ENCODE measurements at regions of chr20 and their contacts with region 1.

Region 1: DNA sequence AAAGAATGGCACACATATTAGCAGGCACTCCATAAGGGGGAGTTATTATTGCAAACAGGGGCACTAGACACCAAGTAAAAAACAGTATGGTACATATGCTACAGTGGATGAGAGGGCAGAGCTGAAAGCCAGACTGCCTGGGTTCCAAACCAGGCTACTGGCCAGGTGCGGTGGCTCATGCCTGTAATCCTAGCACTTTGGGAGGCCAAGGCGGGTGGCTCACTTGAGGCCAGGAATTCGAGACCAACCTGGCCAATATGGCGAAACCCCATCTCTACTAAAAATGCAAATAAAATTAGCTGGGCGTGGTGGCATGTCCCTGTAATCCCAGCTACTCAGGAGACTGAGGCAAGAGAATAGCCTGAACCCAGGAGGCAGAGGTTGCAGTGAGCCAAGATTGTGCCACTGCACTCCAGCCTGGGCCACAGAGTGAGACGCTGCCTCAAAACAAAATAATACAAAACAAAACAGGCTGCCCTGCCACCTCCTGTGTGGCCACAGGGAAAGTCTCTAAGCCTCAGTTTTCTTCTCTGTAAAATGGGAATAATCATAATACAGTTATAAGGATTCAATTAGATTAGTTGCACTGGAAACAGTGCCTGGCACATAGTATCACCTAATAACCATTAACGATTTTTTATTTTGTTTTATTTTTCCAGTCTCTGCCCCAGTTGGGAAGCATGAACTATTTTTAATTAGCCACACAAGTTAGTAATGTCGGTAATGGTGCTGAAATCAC is 7.5 kb upstream of the TTPAL start:
- DNase-seq: no peak
- ATAC-seq: no peak
- H3K4me3 ChIP-seq: no peak overlapping the region
- H3K27ac ChIP-seq: no peak overlapping the region
- H3K4me1 ChIP-seq: no peaks in the 10 kb centered on the region
- H3K27me3 ChIP-seq: no peaks in the 10 kb centered on the region
- CTCF ChIP-seq: no peak

Region 2: GRCh38 chr20:44255942-44256341 is 212.3 kb before region 1 on chr20:
- CTCF ChIA-PET with region 1: no interaction called
- POLR2A ChIA-PET with region 1: interaction called, 12 read pairs
- in situ Hi-C with region 1: no loop called
- intact Hi-C with region 1: no loop called
- DNase-seq: no peak
- ATAC-seq: no peak
- H3K4me3 ChIP-seq: no peak overlapping the region
- H3K27ac ChIP-seq: no peak overlapping the region
- H3K4me1 ChIP-seq: no peaks in the 10 kb centered on the region
- H3K27me3 ChIP-seq: no peaks in the 10 kb centered on the region
- CTCF ChIP-seq: no peak

Region 3: GRCh38 chr20:44651684-44652423 is 183.6 kb after region 1 on chr20 and contains the start of gene ADA:
- CTCF ChIA-PET with region 1: no interaction called
- POLR2A ChIA-PET with region 1: no interaction called
- in situ Hi-C with region 1: no loop called
- intact Hi-C with region 1: no loop called
- DNase-seq: no peak
- ATAC-seq: peak; percentile 89
- H3K4me3 ChIP-seq: peak within 1 kb of the TSS; percentile 72 to 84
- H3K27ac ChIP-seq: peak within 1 kb of the TSS; percentile 78
- H3K4me1 ChIP-seq: peaks cover 12% of the 10 kb centered on the region
- H3K27me3 ChIP-seq: no peaks in the 10 kb centered on the region
- CTCF ChIP-seq: no peak
- total RNA-seq, gene ADA: 53.8 TPM

Measured in Panc1 (cell line).